ENCODE measurements at regions of chr1 and their contacts with region 1.

Region 1: DNA sequence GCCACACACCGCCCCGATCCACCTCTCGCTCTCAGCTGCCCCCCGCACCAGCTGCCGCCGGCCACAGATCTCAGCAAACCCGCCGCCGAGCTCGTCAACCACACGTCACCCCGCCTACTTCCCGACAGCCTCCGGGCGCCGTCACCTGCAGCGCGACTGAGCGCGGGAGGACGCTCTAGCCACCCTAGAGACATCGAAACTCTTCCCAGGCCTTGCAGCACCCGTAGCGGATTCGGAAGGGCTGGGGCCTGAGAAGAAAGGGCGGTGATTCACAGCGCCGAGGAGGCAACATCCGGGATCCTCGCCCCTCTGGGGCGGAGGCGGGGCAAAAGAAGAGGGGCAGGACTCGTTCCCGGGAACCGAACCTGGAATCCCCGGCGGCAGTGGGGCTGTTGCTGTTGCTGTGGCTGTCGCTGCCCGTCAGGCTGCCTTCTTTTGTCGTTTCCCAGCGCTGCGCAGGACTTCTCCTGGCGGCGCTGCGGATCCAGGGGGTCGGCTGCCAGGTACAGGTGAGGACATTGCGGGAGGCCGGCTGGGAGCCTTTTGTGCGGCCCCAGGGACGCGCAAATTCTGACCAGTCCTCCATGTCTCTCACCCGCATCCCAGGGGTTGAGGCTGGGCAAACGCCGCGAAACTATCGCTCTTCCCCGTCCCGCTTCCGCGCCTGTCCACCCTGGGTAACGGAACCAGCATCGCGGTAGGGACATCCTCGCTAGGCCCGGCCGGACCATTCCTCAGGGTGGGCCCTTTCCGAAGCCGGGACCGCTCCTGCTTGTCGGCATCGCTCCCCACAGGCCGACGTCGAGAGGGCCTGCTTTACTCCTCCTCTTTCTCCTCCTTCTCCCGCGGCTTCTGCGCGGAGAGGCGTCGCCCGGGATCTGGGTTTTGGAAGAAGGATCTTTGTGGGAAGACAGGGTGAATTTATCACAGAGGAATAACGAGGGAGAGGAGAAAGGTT is at the starts of genes RO60 and UCHL5:
- DNase-seq: peak; percentile 86 to 99 (median 93)
- ATAC-seq: peak; percentile 95
- H3K4me3 ChIP-seq: peak within 1 kb of the TSS; percentile 61 to 82
- H3K4me3 Mint-ChIP-seq: peak within 1 kb of the TSS; percentile 100
- H3K27ac ChIP-seq: peak within 1 kb of the TSS; percentile 91 to 92
- H3K27ac Mint-ChIP-seq: peak within 1 kb of the TSS; percentile 100
- H3K4me1 ChIP-seq: peaks cover 32% of the 10 kb centered on the region
- H3K4me1 Mint-ChIP-seq: peaks cover 67% of the 10 kb centered on the region
- H3K27me3 ChIP-seq: no peaks in the 10 kb centered on the region
- H3K27me3 Mint-ChIP-seq: no peaks in the 10 kb centered on the region
- CTCF ChIP-seq: no peak
- total RNA-seq, gene RO60: 51.6 to 52.8 TPM
- total RNA-seq, gene UCHL5: 11.7 to 13.1 TPM

Region 2: GRCh38 chr1:193069748-193070385 is 10.3 kb after region 1 on chr1:
- CTCF ChIA-PET with region 1: no interaction called
- POLR2A ChIA-PET with region 1: interaction called, 5 read pairs
- intact Hi-C with region 1: loop called in 1 of 2 experiments (anchors 1 kb)
- DNase-seq: peak in 2 of 9 experiments; percentile 32 to 51
- ATAC-seq: peak; percentile 52
- H3K4me3 ChIP-seq: no peak overlapping the region
- H3K4me3 Mint-ChIP-seq: no peak overlapping the region
- H3K27ac ChIP-seq: peak overlapping the region in 1 of 2 experiments; percentile 74
- H3K27ac Mint-ChIP-seq: peak overlapping the region; percentile 73
- H3K4me1 ChIP-seq: peaks cover 15% of the 10 kb centered on the region
- H3K4me1 Mint-ChIP-seq: peaks cover 59% of the 10 kb centered on the region
- H3K27me3 ChIP-seq: no peaks in the 10 kb centered on the region
- H3K27me3 Mint-ChIP-seq: no peaks in the 10 kb centered on the region
- CTCF ChIP-seq: no peak

Region 3: DNA sequence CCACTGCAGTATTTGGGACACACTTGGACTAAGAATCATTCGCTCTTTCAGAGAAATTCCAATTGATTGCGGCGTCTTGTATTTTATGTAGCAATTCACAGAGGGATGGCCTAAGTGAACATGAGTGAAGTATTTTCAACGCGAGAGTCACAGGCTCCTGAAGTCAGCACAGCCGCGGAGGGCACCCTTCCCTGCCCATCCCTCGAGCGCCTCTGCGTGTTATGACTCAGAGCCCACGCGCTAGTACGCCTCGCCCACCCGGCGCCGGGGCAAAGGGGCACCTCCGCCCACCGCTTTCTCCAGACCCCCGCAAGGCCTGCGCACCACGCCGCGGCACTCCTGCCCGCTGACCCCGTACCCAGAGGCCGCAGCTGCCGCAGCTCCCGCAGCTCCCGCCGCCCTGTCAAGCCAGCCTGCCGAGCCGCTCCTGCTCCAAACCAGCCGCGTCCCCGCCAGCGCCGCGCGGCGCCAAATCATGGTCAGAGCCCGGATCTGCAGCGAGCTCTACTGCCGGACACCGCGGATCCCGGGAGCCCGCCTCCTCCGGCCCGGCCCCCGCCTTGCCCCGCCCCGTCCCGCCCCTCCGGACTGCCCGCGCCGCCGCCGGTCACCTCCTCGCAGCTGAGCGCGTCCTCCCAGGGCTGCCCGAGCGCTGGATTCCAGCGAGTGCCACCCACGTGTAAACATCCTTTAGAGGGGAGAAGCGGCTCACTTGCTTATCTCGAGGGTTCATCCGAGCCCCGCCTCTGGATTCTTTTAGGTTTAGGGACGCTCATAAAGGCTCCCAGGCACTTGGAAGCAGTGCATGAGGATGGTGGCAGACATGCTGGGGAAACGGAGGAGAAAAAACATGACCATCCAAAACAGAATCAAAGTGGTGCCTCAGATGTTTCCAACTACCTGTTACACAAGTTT is 45.6 kb after region 1 on chr1 and contains the start of gene GLRX2:
- CTCF ChIA-PET with region 1: interaction called, 3 read pairs
- POLR2A ChIA-PET with region 1: interaction called, 11 read pairs
- intact Hi-C with region 1: loop called in 1 of 2 experiments (anchors 1 kb)
- DNase-seq: peak; percentile 12 to 79 (median 72)
- ATAC-seq: peak; percentile 97
- H3K4me3 ChIP-seq: peak within 1 kb of the TSS; percentile 61 to 70
- H3K4me3 Mint-ChIP-seq: peak within 1 kb of the TSS; percentile 96
- H3K27ac ChIP-seq: peak within 1 kb of the TSS; percentile 33 to 38
- H3K27ac Mint-ChIP-seq: peak within 1 kb of the TSS; percentile 88
- H3K4me1 ChIP-seq: peaks cover 14% of the 10 kb centered on the region
- H3K4me1 Mint-ChIP-seq: peaks cover 24% of the 10 kb centered on the region
- H3K27me3 ChIP-seq: no peaks in the 10 kb centered on the region
- H3K27me3 Mint-ChIP-seq: no peaks in the 10 kb centered on the region
- CTCF ChIP-seq: no peak
- total RNA-seq, gene GLRX2: 3.4 to 4.2 TPM

Region 4: GRCh38 chr1:193121616-193122593 is 62.4 kb after region 1 on chr1 and contains the start of gene CDC73:
- CTCF ChIA-PET with region 1: interaction called, 22 read pairs
- POLR2A ChIA-PET with region 1: interaction called, 25 read pairs
- intact Hi-C with region 1: loop called (anchors 1 kb)
- DNase-seq: peak; percentile 98 to 100 (median 99)
- ATAC-seq: peak; percentile 92
- H3K4me3 ChIP-seq: peak within 1 kb of the TSS; percentile 89 to 98
- H3K4me3 Mint-ChIP-seq: peak within 1 kb of the TSS; percentile 100
- H3K27ac ChIP-seq: peak within 1 kb of the TSS; percentile 94 to 96
- H3K27ac Mint-ChIP-seq: peak within 1 kb of the TSS; percentile 100
- H3K4me1 ChIP-seq: peaks cover 33% of the 10 kb centered on the region
- H3K4me1 Mint-ChIP-seq: peaks cover 55% of the 10 kb centered on the region
- H3K27me3 ChIP-seq: no peaks in the 10 kb centered on the region
- H3K27me3 Mint-ChIP-seq: no peaks in the 10 kb centered on the region
- CTCF ChIP-seq: peak; percentile 84
- total RNA-seq, gene CDC73: 73.9 to 78.8 TPM

Region 5: GRCh38 chr1:193614817-193615216 is 555.3 kb after region 1 on chr1:
- CTCF ChIA-PET with region 1: no interaction called
- POLR2A ChIA-PET with region 1: no interaction called
- intact Hi-C with region 1: no loop called
- DNase-seq: no peak
- ATAC-seq: no peak
- H3K4me3 ChIP-seq: no peak overlapping the region
- H3K4me3 Mint-ChIP-seq: no peak overlapping the region
- H3K27ac ChIP-seq: no peak overlapping the region
- H3K27ac Mint-ChIP-seq: no peak overlapping the region
- H3K4me1 ChIP-seq: no peaks in the 10 kb centered on the region
- H3K4me1 Mint-ChIP-seq: no peaks in the 10 kb centered on the region
- H3K27me3 ChIP-seq: no peaks in the 10 kb centered on the region
- H3K27me3 Mint-ChIP-seq: no peaks in the 10 kb centered on the region
- CTCF ChIP-seq: no peak

Region 6: DNA sequence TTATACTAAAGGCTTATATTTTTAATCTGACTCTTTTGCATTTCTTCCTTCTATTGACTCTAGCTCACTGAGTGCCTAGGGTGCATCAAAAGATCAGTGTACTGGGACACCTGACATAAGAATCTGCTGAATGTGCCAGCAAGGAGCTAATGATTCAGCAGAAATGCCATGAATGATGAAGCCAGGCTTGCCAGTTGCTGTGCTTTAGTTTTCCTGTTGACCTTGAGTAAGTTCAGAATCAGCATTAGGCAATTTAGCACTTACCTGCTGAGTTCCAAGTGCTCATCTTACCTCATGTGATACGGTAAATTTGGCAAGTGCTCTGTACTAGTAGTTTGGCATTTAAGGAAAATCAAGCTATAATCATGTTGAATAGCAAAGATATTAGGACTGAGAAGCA is 650.1 kb after region 1 on chr1:
- CTCF ChIA-PET with region 1: no interaction called
- POLR2A ChIA-PET with region 1: no interaction called
- intact Hi-C with region 1: no loop called
- DNase-seq: no peak
- ATAC-seq: no peak
- H3K4me3 ChIP-seq: no peak overlapping the region
- H3K4me3 Mint-ChIP-seq: no peak overlapping the region
- H3K27ac ChIP-seq: no peak overlapping the region
- H3K27ac Mint-ChIP-seq: no peak overlapping the region
- H3K4me1 ChIP-seq: no peaks in the 10 kb centered on the region
- H3K4me1 Mint-ChIP-seq: peaks cover 4% of the 10 kb centered on the region
- H3K27me3 ChIP-seq: no peaks in the 10 kb centered on the region
- H3K27me3 Mint-ChIP-seq: no peaks in the 10 kb centered on the region
- CTCF ChIP-seq: no peak